ENCODE measurements at regions of chrX and their contacts with region 1.

Region 1: DNA sequence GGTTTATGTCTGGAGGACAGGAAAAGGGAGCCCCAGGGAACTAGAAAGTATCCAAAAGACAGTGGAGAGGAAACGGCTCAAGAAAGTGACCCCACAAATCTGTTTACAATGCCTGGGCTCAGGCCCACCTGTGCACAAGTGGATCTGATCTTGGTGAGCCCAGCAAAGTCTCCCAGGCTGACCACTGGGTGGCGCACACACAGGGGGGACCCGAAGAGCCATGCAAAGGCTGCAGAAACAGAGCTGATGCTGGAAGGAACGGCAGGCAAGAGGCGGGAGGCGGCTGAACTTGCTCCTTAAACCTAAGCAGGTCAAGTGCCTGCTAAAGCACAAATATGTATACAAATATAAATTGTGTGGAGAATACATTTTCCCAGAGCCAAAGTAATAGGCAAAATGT is 9.5 kb downstream of the HAUS7 start:
- DNase-seq: peak; percentile 47
- H3K4me3 ChIP-seq: no peak overlapping the region
- H3K27ac ChIP-seq: peak overlapping the region; percentile 58
- H3K4me1 ChIP-seq: peaks cover 5% of the 10 kb centered on the region
- H3K27me3 ChIP-seq: no peaks in the 10 kb centered on the region
- CTCF ChIP-seq: peak; percentile 60 to 65
- POLR2A ChIP-seq: no peak

Region 2: GRCh38 chrX:153238361-153238760 is 222.5 kb before region 1 on chrX:
- CTCF ChIA-PET with region 1: no interaction called
- POLR2A ChIA-PET with region 1: no interaction called
- dilution Hi-C with region 1: no loop called
- intact Hi-C with region 1: no loop called
- DNase-seq: no peak
- H3K4me3 ChIP-seq: no peak overlapping the region
- H3K27ac ChIP-seq: no peak overlapping the region
- H3K4me1 ChIP-seq: no peaks in the 10 kb centered on the region
- H3K27me3 ChIP-seq: peaks cover 0 to 2% of the 10 kb centered on the region in 2 experiments
- CTCF ChIP-seq: no peak
- POLR2A ChIP-seq: no peak

Region 3: GRCh38 chrX:153438531-153438930 is 22.3 kb before region 1 on chrX:
- CTCF ChIA-PET with region 1: interaction called, 11 read pairs
- POLR2A ChIA-PET with region 1: no interaction called
- dilution Hi-C with region 1: no loop called
- intact Hi-C with region 1: no loop called
- DNase-seq: peak; percentile 16
- H3K4me3 ChIP-seq: no peak overlapping the region
- H3K27ac ChIP-seq: no peak overlapping the region
- H3K4me1 ChIP-seq: no peaks in the 10 kb centered on the region
- H3K27me3 ChIP-seq: no peaks in the 10 kb centered on the region
- CTCF ChIP-seq: peak; percentile 5 to 16
- POLR2A ChIP-seq: no peak

Region 4: GRCh38 chrX:153488231-153488914 is 27.5 kb after region 1 on chrX:
- CTCF ChIA-PET with region 1: interaction called, 23 read pairs
- POLR2A ChIA-PET with region 1: no interaction called
- dilution Hi-C with region 1: no loop called
- intact Hi-C with region 1: no loop called
- DNase-seq: peak; percentile 91
- H3K4me3 ChIP-seq: no peak overlapping the region
- H3K27ac ChIP-seq: peak overlapping the region; percentile 80
- H3K4me1 ChIP-seq: peaks cover 47% of the 10 kb centered on the region
- H3K27me3 ChIP-seq: no peaks in the 10 kb centered on the region
- CTCF ChIP-seq: no peak
- POLR2A ChIP-seq: no peak

Region 5: DNA sequence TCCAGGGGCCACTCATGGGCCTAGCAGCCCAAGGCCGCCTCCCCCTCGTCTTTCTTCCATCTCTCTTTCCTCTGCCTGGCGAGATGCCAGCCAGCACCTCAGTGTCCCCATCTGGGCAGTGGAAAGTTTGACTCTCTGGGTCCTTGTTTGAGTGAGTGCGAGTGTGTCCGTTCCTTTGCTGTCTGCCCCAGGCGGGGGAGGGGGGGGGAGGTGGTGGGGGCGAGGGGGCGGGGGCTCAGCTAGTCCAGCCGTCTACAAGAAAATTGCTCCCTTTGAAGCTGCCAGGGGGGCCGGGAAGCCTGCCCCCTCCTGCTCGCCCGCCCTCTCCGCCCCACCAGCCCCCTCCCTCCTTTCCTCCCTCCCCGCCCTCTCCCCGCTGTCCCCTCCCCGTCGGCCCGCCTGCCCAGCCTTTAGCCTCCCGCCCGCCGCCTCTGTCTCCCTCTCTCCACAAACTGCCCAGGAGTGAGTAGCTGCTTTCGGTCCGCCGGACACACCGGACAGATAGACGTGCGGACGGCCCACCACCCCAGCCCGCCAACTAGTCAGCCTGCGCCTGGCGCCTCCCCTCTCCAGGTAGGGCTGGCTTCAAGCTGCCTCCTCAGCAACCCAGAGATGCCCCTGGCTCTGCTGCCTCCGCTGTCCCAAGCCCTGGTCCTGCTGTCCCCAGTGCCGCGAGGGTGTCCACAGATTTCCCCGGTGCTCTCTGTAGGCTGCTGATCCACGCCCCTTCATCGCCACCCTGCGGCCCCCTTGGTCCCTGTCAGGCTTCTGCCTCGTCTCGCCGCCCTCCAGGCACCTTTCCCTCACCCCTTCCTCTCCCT is 33.9 kb after region 1 on chrX and contains the start of gene BGN:
- CTCF ChIA-PET with region 1: interaction called, 23 read pairs
- POLR2A ChIA-PET with region 1: no interaction called
- dilution Hi-C with region 1: no loop called
- intact Hi-C with region 1: no loop called
- DNase-seq: peak; percentile 81
- H3K4me3 ChIP-seq: peak within 1 kb of the TSS; percentile 10 to 78 (median 65)
- H3K27ac ChIP-seq: peak within 1 kb of the TSS; percentile 80
- H3K4me1 ChIP-seq: peaks cover 34% of the 10 kb centered on the region
- H3K27me3 ChIP-seq: no peaks in the 10 kb centered on the region
- CTCF ChIP-seq: peak; percentile 30 to 48
- POLR2A ChIP-seq: peak; percentile 75
- total RNA-seq, gene BGN: 453 and 479 TPM in 2 replicates

Region 6: DNA sequence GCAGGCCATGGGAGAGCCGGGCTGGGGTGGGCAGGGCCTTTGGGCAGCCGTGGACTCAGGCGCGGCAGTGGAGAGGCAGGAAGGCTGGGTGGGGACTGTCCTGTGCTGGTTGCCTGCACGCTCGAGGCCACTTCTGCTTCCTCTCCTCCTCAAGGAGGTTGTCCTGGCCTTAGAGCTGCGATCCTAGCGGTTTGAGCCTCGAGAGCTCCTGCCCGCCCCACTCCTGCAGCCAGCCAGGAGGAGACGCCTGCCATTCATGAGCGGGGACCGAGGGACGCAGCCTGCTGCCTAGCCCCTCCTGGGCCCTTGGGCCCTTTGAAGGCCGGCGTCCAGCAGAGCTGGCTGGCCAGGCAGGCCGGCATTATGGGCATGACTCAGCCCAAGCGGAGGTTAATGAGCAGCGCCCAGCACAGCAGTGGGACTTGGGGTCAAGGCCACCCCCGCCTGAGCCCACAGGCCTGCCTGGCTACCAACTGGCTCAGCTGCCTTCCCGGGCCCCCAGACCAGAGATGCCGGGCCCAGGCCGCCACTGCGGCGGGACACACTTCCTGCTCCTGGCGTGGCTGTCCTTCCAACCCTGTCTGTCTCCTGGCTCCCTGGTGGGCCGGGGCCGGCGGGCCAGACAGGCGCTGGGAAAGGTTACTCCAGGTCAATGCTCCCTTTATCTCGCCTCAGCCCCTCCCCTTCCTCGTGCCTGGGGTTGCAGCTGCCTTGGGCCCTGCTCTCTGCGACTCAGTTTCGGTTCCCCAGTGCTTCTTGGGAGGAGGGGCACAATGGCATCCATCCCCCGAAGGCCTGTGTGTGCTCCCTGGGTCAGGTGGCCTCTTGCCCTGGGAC is 265.7 kb after region 1 on chrX:
- CTCF ChIA-PET with region 1: no interaction called
- POLR2A ChIA-PET with region 1: no interaction called
- dilution Hi-C with region 1: no loop called
- intact Hi-C with region 1: no loop called
- DNase-seq: peak; percentile 56
- H3K4me3 ChIP-seq: peak overlapping the region in 1 of 3 experiments; percentile 2
- H3K27ac ChIP-seq: peak overlapping the region; percentile 72
- H3K4me1 ChIP-seq: peaks cover 28% of the 10 kb centered on the region
- H3K27me3 ChIP-seq: no peaks in the 10 kb centered on the region
- CTCF ChIP-seq: no peak
- POLR2A ChIP-seq: no peak